Left cardiac atrium (tissue), 4 donors: ENCODE measurements at regions of chr20 and their contacts with region 1.

Region 1: DNA sequence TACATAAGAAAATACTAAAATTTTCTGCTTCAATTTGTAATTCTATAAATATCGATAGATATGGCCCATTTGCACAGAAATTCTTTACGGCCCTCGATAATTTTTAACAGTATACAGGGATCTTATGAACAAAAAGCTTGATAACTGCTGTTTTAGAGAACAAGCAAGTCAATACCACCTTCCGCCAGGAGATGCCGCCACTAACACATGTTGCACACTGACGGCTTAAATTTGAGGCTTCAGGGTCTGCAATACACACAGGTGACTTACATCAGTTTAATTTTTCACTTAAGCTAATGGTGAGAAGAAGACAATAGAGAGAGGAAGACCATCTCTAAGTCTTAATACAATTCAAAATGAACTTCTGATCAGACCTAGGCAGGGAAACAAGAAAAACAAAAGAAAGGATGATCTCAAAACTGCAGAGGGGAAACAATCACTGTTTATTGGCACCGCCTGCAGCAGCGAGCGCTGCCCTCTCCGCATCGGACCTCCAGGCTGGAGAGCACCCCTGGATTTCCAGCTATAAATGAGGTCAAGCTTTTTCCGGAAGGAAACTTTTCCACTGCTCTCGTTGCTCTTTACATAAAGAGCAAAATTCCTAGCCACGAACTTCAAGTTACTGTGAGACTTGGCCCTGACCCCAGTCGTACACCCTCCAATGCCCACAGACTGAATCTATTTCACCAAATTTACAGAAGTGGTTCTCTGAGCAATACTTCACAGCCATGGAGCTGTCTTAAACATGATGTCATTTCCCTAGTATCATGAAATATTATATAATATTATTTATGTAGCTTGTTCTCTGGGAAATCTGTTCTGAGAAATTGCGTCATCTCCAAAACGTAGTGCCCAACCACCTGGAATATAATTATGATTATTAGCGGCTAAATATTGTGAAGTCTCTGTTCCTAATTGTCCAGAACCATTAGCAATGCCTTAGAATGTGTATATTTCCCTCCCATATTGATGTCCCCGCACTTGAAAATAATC is 54.1 kb downstream of the OTOR start:
- DNase-seq: peak; percentile 61
- ATAC-seq: no peak

Region 2: DNA sequence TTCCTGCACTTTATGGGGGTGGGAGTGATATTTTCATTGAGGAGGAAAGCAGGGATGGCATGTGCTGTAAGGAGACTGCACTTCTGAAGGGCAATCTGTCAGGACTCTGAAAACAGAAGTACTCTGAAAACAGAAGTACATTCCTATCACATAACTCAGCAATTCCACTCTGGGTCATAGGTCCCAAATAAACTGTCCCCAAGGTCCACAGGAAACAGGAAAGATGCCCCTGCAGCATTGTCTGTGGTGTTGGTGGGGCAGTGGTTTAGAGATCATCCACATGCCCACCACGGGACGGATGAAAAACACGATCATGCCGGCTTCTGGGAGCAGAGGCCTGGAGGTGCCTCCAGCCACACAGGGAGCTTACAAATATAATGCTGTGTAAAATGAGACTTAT is 96.2 kb after region 1 on chr20:
- intact Hi-C with region 1: no loop called
- DNase-seq: no peak
- ATAC-seq: no peak

Region 3: DNA sequence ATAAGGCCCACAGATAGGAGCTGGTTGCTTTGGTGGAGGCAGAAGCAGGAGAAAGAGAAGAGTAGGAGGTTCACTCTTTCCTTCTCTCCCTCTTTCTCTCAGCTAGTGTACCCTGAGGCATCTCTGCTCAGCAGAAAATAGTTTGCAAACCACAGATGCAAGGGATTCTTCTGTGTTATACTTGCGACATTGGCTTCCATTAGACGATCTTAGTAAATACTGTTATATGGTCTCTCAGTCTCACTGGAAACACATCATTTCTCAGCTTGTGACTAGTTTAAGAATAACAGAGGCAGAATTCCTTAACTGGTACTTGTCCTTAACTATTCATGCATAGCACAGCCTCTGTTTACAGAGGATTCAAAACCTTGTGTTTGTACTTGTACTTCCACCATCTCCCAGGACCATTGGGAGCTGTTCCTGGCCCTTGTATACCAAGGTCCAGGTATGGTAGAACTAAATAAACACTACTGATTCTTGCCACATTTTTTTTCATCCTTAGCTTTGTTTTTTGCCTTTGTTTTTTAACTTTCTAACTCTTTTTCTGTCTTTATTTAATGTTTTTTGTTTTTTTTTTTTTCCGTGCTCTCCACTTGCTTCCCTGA is 164.2 kb after region 1 on chr20:
- intact Hi-C with region 1: no loop called
- DNase-seq: no peak
- ATAC-seq: no peak

Region 4: DNA sequence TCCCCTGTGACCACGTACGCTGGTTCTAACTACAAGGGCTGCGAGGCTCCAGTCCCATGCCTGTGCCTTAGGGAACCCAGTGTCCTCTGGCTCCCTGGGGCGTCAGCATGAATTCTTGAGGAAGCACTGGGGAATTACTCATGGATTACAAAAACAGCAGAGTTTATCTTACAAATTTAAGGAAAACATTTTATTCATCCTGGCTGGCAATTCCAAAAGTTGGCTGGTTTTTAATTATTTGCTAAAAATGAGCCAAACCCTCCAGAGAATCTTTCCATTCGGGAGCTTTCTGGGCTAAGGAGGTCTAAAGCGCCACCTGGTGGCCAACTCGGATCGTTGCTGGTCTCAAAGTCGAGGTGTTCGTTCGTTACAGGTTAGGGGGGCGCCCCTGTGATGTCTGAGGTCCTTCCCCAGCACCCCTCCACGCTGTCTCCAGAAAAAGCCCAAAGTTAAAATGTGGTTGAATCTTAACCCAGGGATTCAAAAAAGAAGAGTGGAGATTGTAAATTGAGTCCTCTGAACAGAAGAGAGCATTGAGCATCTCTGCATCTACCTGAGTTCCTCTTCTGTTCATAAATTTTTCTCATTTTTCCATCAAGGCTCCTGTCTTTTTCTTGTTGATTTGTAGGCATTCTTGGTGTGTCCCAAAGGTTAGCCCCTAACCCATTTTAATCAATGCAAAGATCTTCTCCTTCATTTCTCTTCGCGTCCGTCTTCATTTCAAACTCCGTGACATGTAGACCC is 629.6 kb after region 1 on chr20:
- intact Hi-C with region 1: loop called (anchors 2 to 5 kb)
- DNase-seq: peak; percentile 59
- ATAC-seq: peak in 1 of 2 donors; percentile 34

Region 5: DNA sequence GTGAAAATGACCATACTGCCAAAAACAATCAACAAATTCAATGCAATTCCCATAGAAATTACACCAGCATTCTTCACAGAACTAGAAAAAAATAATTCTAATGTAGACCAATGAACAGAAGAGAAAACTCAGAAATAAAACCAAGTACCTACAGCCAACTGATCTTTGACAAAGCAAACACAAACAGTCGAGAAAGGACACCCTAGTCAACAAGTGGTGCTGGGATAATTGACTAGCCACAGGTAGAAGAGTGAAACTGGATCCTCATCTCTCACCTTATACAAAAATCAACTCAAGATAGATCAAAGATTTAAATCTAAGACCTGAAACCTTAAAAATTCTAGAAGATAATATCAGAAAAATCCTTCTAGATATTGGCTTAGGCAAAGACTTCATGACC is 1441.6 kb after region 1 on chr20:
- intact Hi-C with region 1: loop called in 1 of 2 experiments (anchors 5 kb)
- DNase-seq: no peak
- ATAC-seq: no peak